Heart right ventricle (tissue), 16 donors: ENCODE measurements at regions of chr10 and their contacts with region 1.

Region 1: DNA sequence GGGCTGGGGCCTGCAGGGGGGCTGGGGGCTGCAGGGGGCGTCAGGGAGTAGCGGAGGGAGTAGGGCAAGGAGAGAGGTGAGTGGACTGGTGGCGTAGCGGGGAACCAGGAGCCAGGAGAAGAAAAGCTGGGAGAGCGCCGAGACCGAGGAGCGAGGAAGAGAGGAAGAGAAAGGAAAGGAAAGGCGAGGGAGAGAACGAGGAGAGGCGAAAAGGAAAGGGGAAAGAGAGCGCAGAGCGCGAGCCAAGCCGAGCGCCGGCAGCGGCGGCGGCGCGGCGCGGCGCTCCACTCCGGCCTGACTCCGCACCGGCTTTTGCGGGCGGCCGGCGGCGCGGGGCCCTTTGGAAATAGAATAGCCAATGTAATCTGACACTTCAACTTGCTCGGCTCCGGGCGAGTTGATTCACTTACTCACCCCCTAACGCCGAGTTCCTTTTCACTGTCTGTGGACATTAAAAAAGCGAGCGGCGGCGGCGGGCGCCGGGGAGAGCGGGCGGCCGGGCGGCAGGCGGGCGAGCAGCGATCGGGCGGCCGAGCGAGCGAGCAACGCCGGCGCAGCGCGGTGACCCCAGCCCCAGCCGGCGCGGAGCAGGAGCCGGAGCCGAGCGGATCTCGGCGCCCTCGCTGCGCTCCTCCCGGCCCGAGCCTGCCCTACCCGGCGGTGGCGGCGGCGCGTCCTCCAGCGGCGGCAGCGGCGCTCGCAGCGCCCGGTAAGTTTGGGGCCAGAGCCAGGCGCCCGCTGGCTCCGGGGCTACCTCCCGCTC is at the start of gene ZMIZ1:
- DNase-seq: peak; percentile 87 to 93
- ATAC-seq: peak in 7 of 8 donors; percentile 18 to 57 (median 36)
- H3K4me3 ChIP-seq: peak within 1 kb of the TSS; percentile 71 to 98 (median 92)
- H3K27ac ChIP-seq: peak within 1 kb of the TSS; percentile 97 to 100 (median 99)
- H3K4me1 ChIP-seq: peaks cover 21 to 51% (median 37%) of the 10 kb centered on the region in 9 donors
- H3K27me3 ChIP-seq: no peaks in the 10 kb centered on the region
- CTCF ChIP-seq: peak in 5 of 9 donors; percentile 6 to 54 (median 37)
- total RNA-seq, gene ZMIZ1: 40.4 to 61.5 (median 50.8) TPM

Region 2: GRCh38 chr10:78211561-78212051 is 857.1 kb before region 1 on chr10:
- intact Hi-C with region 1: loop called in 2 of 10 experiments (anchors 10 kb)
- DNase-seq: peak in 1 of 2 donors; percentile 39
- ATAC-seq: peak in 5 of 8 donors; percentile 1 to 40 (median 9)
- H3K4me3 ChIP-seq: no peak overlapping the region
- H3K27ac ChIP-seq: peak overlapping the region in 4 of 10 donors; percentile 1 to 56 (median 12)
- H3K4me1 ChIP-seq: peaks cover 20 to 40% (median 25%) of the 10 kb centered on the region in 9 donors
- H3K27me3 ChIP-seq: no peaks in the 10 kb centered on the region
- CTCF ChIP-seq: peak; percentile 19 to 66 (median 51)

Region 3: DNA sequence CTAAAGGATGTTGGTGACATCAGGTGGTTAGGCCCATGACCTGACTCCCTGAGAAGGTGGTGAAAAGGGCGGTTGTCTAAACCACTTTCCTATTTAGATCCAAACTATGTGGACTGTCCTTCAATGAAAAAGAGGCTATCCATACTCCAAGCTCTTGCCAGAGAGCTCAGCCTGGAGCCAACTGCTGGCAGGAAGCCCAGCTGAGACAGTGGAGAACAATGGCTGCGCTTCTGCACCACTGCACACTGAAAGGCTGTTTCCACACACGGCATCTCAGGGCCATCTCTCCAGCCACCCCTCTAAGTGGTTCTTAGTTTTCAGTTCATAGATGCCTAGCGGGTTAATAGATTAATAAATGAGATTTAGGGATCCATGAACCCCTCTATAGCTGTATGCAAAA is 488.7 kb before region 1 on chr10:
- intact Hi-C with region 1: loop called in 1 of 10 experiments (anchors 10 kb)
- DNase-seq: peak; percentile 69 to 78
- ATAC-seq: peak; percentile 71 to 86 (median 80)
- H3K4me3 ChIP-seq: no peak overlapping the region
- H3K27ac ChIP-seq: peak overlapping the region in 4 of 10 donors; percentile 10 to 52 (median 36)
- H3K4me1 ChIP-seq: peaks cover 3 to 48% (median 29%) of the 10 kb centered on the region in 9 donors
- H3K27me3 ChIP-seq: no peaks in the 10 kb centered on the region
- CTCF ChIP-seq: no peak

Region 4: GRCh38 chr10:78685466-78686163 is 383.1 kb before region 1 on chr10:
- intact Hi-C with region 1: no loop called
- DNase-seq: no peak
- ATAC-seq: no peak
- H3K4me3 ChIP-seq: no peak overlapping the region
- H3K27ac ChIP-seq: no peak overlapping the region
- H3K4me1 ChIP-seq: peaks cover 0 to 5% (median 0%) of the 10 kb centered on the region in 9 donors
- H3K27me3 ChIP-seq: no peaks in the 10 kb centered on the region
- CTCF ChIP-seq: no peak

Region 5: DNA sequence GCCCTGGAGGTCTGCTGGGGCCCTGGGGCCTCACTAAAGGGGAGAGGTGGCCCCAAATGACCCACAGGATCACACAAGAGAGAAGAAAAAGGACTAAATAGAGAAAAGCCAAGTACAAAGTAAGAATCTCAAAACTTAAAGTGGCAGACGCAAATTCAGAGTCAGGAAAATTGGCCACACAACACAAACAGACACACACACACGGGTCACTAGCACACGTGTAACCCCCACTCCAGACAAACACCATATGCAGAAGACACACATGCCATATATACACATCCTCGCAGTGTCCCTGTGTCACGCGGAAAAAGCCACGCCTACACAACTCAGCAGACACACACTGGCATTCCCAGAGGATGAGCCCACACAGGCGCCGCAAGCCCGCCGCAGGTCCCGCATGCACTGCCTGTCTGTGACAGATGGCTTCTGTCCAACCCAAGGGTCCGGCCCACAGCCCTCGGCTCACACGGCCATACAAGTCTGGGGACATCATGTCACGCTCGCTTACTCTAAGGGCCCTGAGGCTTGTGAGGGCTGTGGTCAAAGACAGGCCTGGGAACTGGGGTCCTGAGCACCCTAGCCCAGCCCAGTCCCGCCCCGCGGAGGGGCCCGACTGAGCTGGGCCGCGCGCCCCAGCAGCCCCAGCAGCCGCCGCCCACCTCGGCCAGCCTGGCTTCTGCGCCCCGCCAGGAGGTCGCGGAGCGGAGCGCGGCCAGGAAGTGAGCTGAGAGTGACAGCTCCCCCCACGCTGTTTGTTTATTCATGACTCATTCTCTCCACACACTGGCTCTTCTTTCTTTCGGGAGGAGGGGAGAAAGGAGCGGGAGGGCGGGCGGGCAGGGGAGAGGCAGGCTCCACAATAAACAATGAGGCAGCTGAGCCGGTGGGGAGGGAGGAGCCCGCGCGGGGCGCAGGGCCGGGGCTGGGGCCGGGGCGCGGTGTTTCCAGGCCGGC is 95.5 kb before region 1 on chr10:
- intact Hi-C with region 1: loop called in 8 of 10 experiments (anchors 1 to 10 kb)
- DNase-seq: peak; percentile 83 to 88
- ATAC-seq: peak; percentile 64 to 82 (median 75)
- H3K4me3 ChIP-seq: peak overlapping the region; percentile 15 to 60 (median 55)
- H3K27ac ChIP-seq: peak overlapping the region; percentile 94 to 99 (median 96)
- H3K4me1 ChIP-seq: peaks cover 12 to 45% (median 31%) of the 10 kb centered on the region in 9 donors
- H3K27me3 ChIP-seq: no peaks in the 10 kb centered on the region
- CTCF ChIP-seq: no peak

Region 6: DNA sequence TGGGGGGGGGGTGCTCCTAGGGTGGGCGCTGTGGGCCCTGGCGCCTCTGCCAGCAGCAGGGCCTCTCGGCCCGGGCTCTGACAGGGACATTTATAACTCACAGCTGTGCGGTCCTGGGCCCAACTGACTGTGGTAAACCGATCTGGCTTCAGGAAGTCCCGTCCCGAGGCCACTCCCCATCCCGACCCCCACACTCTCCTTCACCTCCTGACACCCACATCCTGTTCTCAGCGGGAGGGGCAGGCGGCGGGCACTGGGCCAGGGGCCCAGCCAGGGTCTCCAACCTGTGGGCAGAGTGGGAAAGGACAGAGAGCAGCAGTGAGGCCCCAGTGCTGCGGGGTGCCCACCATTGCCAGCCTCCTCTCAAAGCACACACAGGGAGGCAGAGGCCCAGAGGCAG is 69.1 kb after region 1 on chr10:
- intact Hi-C with region 1: loop called in 6 of 10 experiments (anchors 5 to 10 kb)
- DNase-seq: peak in 1 of 2 donors; percentile 56
- ATAC-seq: peak; percentile 11 to 44 (median 32)
- H3K4me3 ChIP-seq: peak overlapping the region in 2 of 10 donors; percentile 7 to 11
- H3K27ac ChIP-seq: peak overlapping the region; percentile 73 to 97 (median 92)
- H3K4me1 ChIP-seq: peaks cover 77 to 100% (median 100%) of the 10 kb centered on the region in 9 donors
- H3K27me3 ChIP-seq: no peaks in the 10 kb centered on the region
- CTCF ChIP-seq: no peak

Region 7: GRCh38 chr10:79195091-79195923 is 126.6 kb after region 1 on chr10:
- intact Hi-C with region 1: loop called in 8 of 10 experiments (anchors 1 to 5 kb)
- DNase-seq: peak; percentile 86 to 87
- ATAC-seq: peak; percentile 76 to 92 (median 86)
- H3K4me3 ChIP-seq: peak overlapping the region in 1 of 10 donors; percentile 19
- H3K27ac ChIP-seq: peak overlapping the region; percentile 45 to 85 (median 66)
- H3K4me1 ChIP-seq: peaks cover 39 to 69% (median 50%) of the 10 kb centered on the region in 9 donors
- H3K27me3 ChIP-seq: no peaks in the 10 kb centered on the region
- CTCF ChIP-seq: peak; percentile 96 to 98 (median 97)